CD8-positive, alpha-beta T cell (primary cell): ENCODE measurements at regions of chr11 and their contacts with region 1.

Region 1: GRCh38 chr11:31369348-31370329 is at the starts of genes DCDC1 and DNAJC24:
- DNase-seq: peak; percentile 84 to 96 (median 94)
- ATAC-seq: peak; percentile 95
- H3K4me3 ChIP-seq: peak within 1 kb of the TSS; percentile 73 to 93
- H3K4me3 Mint-ChIP-seq: peak within 1 kb of the TSS; percentile 100
- H3K27ac ChIP-seq: peak within 1 kb of the TSS; percentile 59 to 84
- H3K27ac Mint-ChIP-seq: peak within 1 kb of the TSS; percentile 98
- H3K4me1 ChIP-seq: peaks cover 30% of the 10 kb centered on the region
- H3K4me1 Mint-ChIP-seq: peaks cover 59% of the 10 kb centered on the region
- H3K27me3 ChIP-seq: peaks cover 0 to 5% of the 10 kb centered on the region in 2 experiments
- H3K27me3 Mint-ChIP-seq: no peaks in the 10 kb centered on the region
- CTCF ChIP-seq: no peak
- total RNA-seq, gene DCDC1: 0.19 TPM in 1 of 2 experiments, not detected in the other
- total RNA-seq, gene DNAJC24: 7.0 to 7.3 TPM

Region 2: GRCh38 chr11:30322826-30323710 is 1046.6 kb before region 1 on chr11 and contains the start of gene ARL14EP:
- CTCF ChIA-PET with region 1: no interaction called
- POLR2A ChIA-PET with region 1: no interaction called
- intact Hi-C with region 1: loop called (anchors 2 to 5 kb)
- DNase-seq: peak; percentile 73 to 93 (median 88)
- ATAC-seq: peak; percentile 82
- H3K4me3 ChIP-seq: peak within 1 kb of the TSS; percentile 79 to 86
- H3K4me3 Mint-ChIP-seq: peak within 1 kb of the TSS; percentile 99
- H3K27ac ChIP-seq: peak within 1 kb of the TSS; percentile 83 to 84
- H3K27ac Mint-ChIP-seq: peak within 1 kb of the TSS; percentile 100
- H3K4me1 ChIP-seq: peaks cover 45% of the 10 kb centered on the region
- H3K4me1 Mint-ChIP-seq: peaks cover 52% of the 10 kb centered on the region
- H3K27me3 ChIP-seq: no peaks in the 10 kb centered on the region
- H3K27me3 Mint-ChIP-seq: no peaks in the 10 kb centered on the region
- CTCF ChIP-seq: no peak
- total RNA-seq, gene ARL14EP: 28.1 to 30.6 TPM

Region 3: GRCh38 chr11:31397239-31397834 is 27.7 kb after region 1 on chr11:
- CTCF ChIA-PET with region 1: interaction called, 3 read pairs
- POLR2A ChIA-PET with region 1: no interaction called
- intact Hi-C with region 1: loop called in 1 of 2 experiments (anchors 2 kb)
- DNase-seq: peak in 2 of 9 experiments; percentile 22 to 48
- ATAC-seq: no peak
- H3K4me3 ChIP-seq: no peak overlapping the region
- H3K4me3 Mint-ChIP-seq: no peak overlapping the region
- H3K27ac ChIP-seq: no peak overlapping the region
- H3K27ac Mint-ChIP-seq: no peak overlapping the region
- H3K4me1 ChIP-seq: no peaks in the 10 kb centered on the region
- H3K4me1 Mint-ChIP-seq: no peaks in the 10 kb centered on the region
- H3K27me3 ChIP-seq: no peaks in the 10 kb centered on the region
- H3K27me3 Mint-ChIP-seq: no peaks in the 10 kb centered on the region
- CTCF ChIP-seq: peak; percentile 61

Region 4: DNA sequence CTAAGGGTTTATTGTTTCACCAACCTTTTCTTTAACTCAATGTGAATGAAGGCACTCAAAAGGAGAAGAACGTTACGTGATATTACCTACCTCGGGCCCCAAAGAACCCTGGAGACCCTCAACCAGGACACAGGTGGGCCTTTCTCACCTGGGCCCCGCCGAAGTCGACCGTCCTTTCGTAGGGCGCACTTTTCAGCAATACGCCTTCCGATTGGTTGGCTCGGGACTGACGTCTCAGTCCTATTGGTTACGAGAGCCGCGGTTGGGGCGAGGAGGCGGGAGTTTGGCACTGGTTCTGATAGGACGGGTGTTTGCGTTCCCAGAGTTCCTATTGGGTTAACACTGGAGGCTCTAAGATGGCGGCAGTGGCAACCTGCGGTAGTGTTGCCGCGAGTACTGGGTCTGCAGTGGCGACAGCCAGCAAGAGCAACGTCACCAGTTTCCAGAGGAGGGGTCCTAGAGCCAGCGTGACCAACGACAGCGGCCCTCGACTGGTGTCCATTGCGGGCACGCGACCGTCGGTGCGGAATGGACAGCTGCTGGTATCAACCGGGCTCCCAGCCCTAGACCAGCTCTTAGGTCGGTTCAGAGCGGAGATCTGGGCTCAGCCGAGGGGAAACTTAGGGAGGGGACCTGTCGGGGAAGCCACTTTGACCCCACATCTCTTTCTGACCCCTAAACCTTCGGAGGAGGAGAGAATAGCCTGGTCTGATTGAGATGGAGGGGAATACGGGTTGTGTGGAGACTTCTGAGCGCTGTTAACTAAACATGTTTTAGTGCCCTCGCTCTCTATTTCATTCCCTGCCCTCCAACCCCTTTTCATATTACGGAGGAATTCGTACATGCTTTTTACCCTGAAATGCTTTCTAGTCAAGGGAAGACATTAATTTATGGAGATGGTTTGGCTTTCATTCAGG is 140.0 kb after region 1 on chr11 and contains the starts of genes ELP4 and IMMP1L:
- CTCF ChIA-PET with region 1: no interaction called
- POLR2A ChIA-PET with region 1: no interaction called
- intact Hi-C with region 1: loop called (anchors 1 kb)
- DNase-seq: peak; percentile 91 to 98 (median 95)
- ATAC-seq: peak; percentile 98
- H3K4me3 ChIP-seq: peak within 1 kb of the TSS; percentile 96 to 99
- H3K4me3 Mint-ChIP-seq: peak within 1 kb of the TSS; percentile 100
- H3K27ac ChIP-seq: peak within 1 kb of the TSS; percentile 86 to 94
- H3K27ac Mint-ChIP-seq: peak within 1 kb of the TSS; percentile 99
- H3K4me1 ChIP-seq: peaks cover 24% of the 10 kb centered on the region
- H3K4me1 Mint-ChIP-seq: peaks cover 58% of the 10 kb centered on the region
- H3K27me3 ChIP-seq: no peaks in the 10 kb centered on the region
- H3K27me3 Mint-ChIP-seq: no peaks in the 10 kb centered on the region
- CTCF ChIP-seq: no peak
- total RNA-seq, gene ELP4: 7.9 to 8.0 TPM
- total RNA-seq, gene IMMP1L: 4.8 to 9.4 TPM

Region 5: DNA sequence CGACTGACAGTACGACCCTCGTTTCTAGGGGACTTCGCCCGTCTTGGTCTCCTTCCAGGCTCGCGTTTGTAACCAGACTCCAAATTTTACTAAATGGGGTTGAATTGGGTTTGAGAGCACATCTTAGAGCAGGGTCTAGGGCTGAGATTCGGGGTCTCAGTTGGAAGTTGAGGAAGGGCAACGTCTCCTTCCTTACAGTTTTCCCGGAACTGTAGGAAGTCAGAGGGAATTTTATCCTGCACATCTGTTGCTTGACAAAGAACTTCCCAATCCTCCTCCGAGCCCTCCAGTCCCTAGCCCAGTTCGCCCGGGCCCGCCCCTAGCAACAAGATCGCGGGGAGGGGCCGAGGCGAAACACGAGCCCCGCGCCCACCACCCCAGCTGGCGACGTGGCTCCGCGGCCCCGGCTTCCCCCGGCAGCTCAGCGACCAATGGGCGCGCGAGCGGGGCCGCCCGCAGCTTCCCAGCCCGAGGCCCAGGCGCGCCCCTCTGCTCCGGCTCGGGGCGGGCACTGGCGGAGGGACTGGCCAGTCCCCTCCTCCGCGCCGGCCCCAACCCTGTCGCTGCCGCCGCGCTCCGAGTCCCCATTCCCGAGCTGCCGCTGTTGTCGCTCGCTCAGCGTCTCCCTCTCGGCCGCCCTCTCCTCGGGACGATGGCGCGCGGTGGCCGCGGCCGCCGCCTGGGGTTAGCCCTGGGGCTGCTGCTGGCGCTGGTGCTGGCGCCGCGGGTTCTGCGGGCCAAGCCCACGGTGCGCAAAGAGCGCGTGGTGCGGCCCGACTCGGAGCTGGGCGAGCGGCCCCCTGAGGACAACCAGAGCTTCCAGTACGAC is 721.1 kb after region 1 on chr11 and contains the start of gene RCN1:
- CTCF ChIA-PET with region 1: no interaction called
- POLR2A ChIA-PET with region 1: no interaction called
- intact Hi-C with region 1: loop called (anchors 5 to 10 kb)
- DNase-seq: peak in 7 of 9 experiments; percentile 11 to 62 (median 30)
- ATAC-seq: peak; percentile 60
- H3K4me3 ChIP-seq: peak within 1 kb of the TSS; percentile 70 to 72
- H3K4me3 Mint-ChIP-seq: peak within 1 kb of the TSS; percentile 85
- H3K27ac ChIP-seq: peak within 1 kb of the TSS; percentile 62 to 76
- H3K27ac Mint-ChIP-seq: peak within 1 kb of the TSS; percentile 83
- H3K4me1 ChIP-seq: peaks cover 9% of the 10 kb centered on the region
- H3K4me1 Mint-ChIP-seq: peaks cover 32% of the 10 kb centered on the region
- H3K27me3 ChIP-seq: no peaks in the 10 kb centered on the region
- H3K27me3 Mint-ChIP-seq: peaks cover 13% of the 10 kb centered on the region
- CTCF ChIP-seq: no peak
- total RNA-seq, gene RCN1: 8.2 to 10.8 TPM

Region 6: GRCh38 chr11:32583459-32584271 is 1214.0 kb after region 1 on chr11 and contains the start of gene EIF3M:
- CTCF ChIA-PET with region 1: no interaction called
- POLR2A ChIA-PET with region 1: no interaction called
- intact Hi-C with region 1: loop called (anchors 2 kb)
- DNase-seq: peak; percentile 91 to 98 (median 95)
- ATAC-seq: peak; percentile 98
- H3K4me3 ChIP-seq: peak within 1 kb of the TSS; percentile 80 to 93
- H3K4me3 Mint-ChIP-seq: peak within 1 kb of the TSS; percentile 99
- H3K27ac ChIP-seq: peak within 1 kb of the TSS; percentile 81 to 86
- H3K27ac Mint-ChIP-seq: peak within 1 kb of the TSS; percentile 99
- H3K4me1 ChIP-seq: peaks cover 29% of the 10 kb centered on the region
- H3K4me1 Mint-ChIP-seq: peaks cover 39% of the 10 kb centered on the region
- H3K27me3 ChIP-seq: no peaks in the 10 kb centered on the region
- H3K27me3 Mint-ChIP-seq: no peaks in the 10 kb centered on the region
- CTCF ChIP-seq: no peak
- total RNA-seq, gene EIF3M: 269 to 274 TPM